ENCODE measurements at regions of chr11 and their contacts with region 1.

Region 1: GRCh38 chr11:16785520-16786128 is 47.2 kb downstream of the C11orf58 start:
- DNase-seq: peak in 4 of 5 donors; percentile 68 to 75 (median 71)
- ATAC-seq: peak; percentile 33 to 77 (median 72)
- H3K4me3 ChIP-seq: no peak overlapping the region
- H3K27ac ChIP-seq: peak overlapping the region in 5 of 12 donors; percentile 28 to 68 (median 46)
- H3K4me1 ChIP-seq: peaks cover 0 to 71% (median 35%) of the 10 kb centered on the region in 12 donors
- H3K27me3 ChIP-seq: no peaks in the 10 kb centered on the region
- CTCF ChIP-seq: peak; percentile 80 to 97 (median 88)
- POLR2A ChIP-seq: no peak

Region 2: GRCh38 chr11:16820324-16821092 is 34.9 kb after region 1 on chr11:
- intact Hi-C with region 1: loop called in 4 of 10 experiments (anchors 2 to 5 kb)
- DNase-seq: peak; percentile 79 to 89 (median 87)
- ATAC-seq: peak; percentile 64 to 80 (median 69)
- H3K4me3 ChIP-seq: no peak overlapping the region
- H3K27ac ChIP-seq: peak overlapping the region in 10 of 12 donors; percentile 19 to 77 (median 50)
- H3K4me1 ChIP-seq: peaks cover 0 to 72% (median 37%) of the 10 kb centered on the region in 12 donors
- H3K27me3 ChIP-seq: no peaks in the 10 kb centered on the region
- CTCF ChIP-seq: peak; percentile 69 to 93 (median 87)
- POLR2A ChIP-seq: no peak

Region 3: GRCh38 chr11:16897470-16898061 is 111.9 kb after region 1 on chr11:
- intact Hi-C with region 1: loop called in 1 of 10 experiments (anchors 10 kb)
- DNase-seq: no peak
- ATAC-seq: peak in 3 of 4 donors; percentile 25 to 54 (median 35)
- H3K4me3 ChIP-seq: no peak overlapping the region
- H3K27ac ChIP-seq: peak overlapping the region in 2 of 12 donors; percentile 14 to 30
- H3K4me1 ChIP-seq: peaks cover 0 to 43% (median 21%) of the 10 kb centered on the region in 12 donors
- H3K27me3 ChIP-seq: no peaks in the 10 kb centered on the region
- CTCF ChIP-seq: no peak
- POLR2A ChIP-seq: no peak

Region 4: GRCh38 chr11:16945671-16946469 is 160.2 kb after region 1 on chr11:
- intact Hi-C with region 1: loop called in 2 of 10 experiments (anchors 5 kb)
- DNase-seq: peak in 4 of 5 donors; percentile 45 to 63 (median 60)
- ATAC-seq: peak; percentile 63 to 91 (median 87)
- H3K4me3 ChIP-seq: no peak overlapping the region
- H3K27ac ChIP-seq: no peak overlapping the region
- H3K4me1 ChIP-seq: peaks cover 0 to 15% (median 0%) of the 10 kb centered on the region in 12 donors
- H3K27me3 ChIP-seq: no peaks in the 10 kb centered on the region
- CTCF ChIP-seq: peak; percentile 59 to 75 (median 66)
- POLR2A ChIP-seq: no peak

Region 5: DNA sequence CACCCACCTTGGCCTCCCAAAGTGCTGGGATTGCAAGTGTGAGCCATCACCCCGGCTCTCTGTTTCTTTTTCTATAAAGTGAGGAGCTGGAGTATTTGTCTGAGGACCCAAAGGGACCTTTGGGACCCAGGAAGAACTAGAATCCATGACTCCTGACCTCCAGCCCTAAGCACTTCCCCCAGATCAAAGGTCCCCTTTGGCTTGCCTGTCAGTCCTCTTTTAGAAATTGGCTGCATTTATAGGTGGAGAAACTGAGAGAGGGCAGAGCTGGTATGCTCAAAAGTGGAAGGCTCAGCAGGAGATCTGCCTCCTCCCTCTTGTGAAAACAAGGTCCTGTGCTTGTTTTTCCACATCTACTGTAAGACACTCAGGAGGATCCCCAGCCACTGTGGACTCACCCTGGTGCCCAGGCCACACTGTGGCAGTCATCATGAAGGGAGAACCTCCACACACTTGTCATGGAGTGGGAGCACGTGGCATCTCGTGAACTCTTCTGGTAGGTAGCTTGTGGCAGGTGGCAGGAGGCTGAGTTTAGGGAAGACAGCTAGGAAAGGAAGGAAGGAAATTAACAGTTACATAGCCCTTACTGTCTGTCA is 241.0 kb after region 1 on chr11:
- intact Hi-C with region 1: no loop called
- DNase-seq: no peak
- ATAC-seq: no peak
- H3K4me3 ChIP-seq: no peak overlapping the region
- H3K27ac ChIP-seq: no peak overlapping the region
- H3K4me1 ChIP-seq: no peaks in the 10 kb centered on the region
- H3K27me3 ChIP-seq: no peaks in the 10 kb centered on the region
- CTCF ChIP-seq: no peak
- POLR2A ChIP-seq: no peak

Region 6: GRCh38 chr11:17504330-17505107 is 718.9 kb after region 1 on chr11:
- intact Hi-C with region 1: loop called in 1 of 10 experiments (anchors 10 kb)
- DNase-seq: peak; percentile 73 to 86 (median 77)
- ATAC-seq: peak; percentile 59 to 79 (median 71)
- H3K4me3 ChIP-seq: no peak overlapping the region
- H3K27ac ChIP-seq: no peak overlapping the region
- H3K4me1 ChIP-seq: peaks cover 0 to 19% (median 12%) of the 10 kb centered on the region in 12 donors
- H3K27me3 ChIP-seq: peaks cover 0 to 1% (median 0%) of the 10 kb centered on the region in 9 donors
- CTCF ChIP-seq: peak; percentile 80 to 94 (median 90)
- POLR2A ChIP-seq: no peak